Calu3 (cell line): ENCODE measurements at regions of chr1 and their contacts with region 1.

Region 1: GRCh38 chr1:92461364-92462097 is 25.2 kb downstream of the GFI1 start:
- DNase-seq: no peak
- H3K4me3 Mint-ChIP-seq: no peak overlapping the region
- H3K27ac Mint-ChIP-seq: no peak overlapping the region
- H3K4me1 Mint-ChIP-seq: no peaks in the 10 kb centered on the region
- H3K27me3 Mint-ChIP-seq: no peaks in the 10 kb centered on the region
- CTCF ChIP-seq: no peak

Region 2: GRCh38 chr1:92515796-92516201 is 54.3 kb after region 1 on chr1:
- CTCF ChIA-PET with region 1: no interaction called
- intact Hi-C with region 1: no loop called
- DNase-seq: no peak
- H3K4me3 Mint-ChIP-seq: no peak overlapping the region
- H3K27ac Mint-ChIP-seq: no peak overlapping the region
- H3K4me1 Mint-ChIP-seq: no peaks in the 10 kb centered on the region
- H3K27me3 Mint-ChIP-seq: no peaks in the 10 kb centered on the region
- CTCF ChIP-seq: no peak

Region 3: DNA sequence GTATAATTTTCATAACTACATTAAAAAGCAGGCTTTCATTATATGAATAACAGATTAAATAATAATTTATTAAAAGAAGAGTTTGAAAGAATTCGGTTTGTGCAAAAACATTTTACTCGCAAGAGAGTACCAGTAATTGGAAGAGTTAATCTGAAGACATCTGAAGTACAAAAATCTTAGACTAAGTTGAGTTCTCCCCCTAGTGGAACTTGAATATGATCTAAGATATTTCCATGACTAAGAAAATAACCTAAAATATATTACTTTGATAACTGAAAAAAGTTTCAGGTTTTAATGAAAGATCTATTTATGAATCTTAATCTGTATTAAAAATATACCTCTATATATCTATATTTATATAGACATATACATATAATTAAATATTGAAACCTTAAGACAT is 137.7 kb after region 1 on chr1:
- CTCF ChIA-PET with region 1: no interaction called
- intact Hi-C with region 1: loop called (anchors 10 kb)
- DNase-seq: no peak
- H3K4me3 Mint-ChIP-seq: no peak overlapping the region
- H3K27ac Mint-ChIP-seq: no peak overlapping the region
- H3K4me1 Mint-ChIP-seq: no peaks in the 10 kb centered on the region
- H3K27me3 Mint-ChIP-seq: no peaks in the 10 kb centered on the region
- CTCF ChIP-seq: no peak

Region 4: DNA sequence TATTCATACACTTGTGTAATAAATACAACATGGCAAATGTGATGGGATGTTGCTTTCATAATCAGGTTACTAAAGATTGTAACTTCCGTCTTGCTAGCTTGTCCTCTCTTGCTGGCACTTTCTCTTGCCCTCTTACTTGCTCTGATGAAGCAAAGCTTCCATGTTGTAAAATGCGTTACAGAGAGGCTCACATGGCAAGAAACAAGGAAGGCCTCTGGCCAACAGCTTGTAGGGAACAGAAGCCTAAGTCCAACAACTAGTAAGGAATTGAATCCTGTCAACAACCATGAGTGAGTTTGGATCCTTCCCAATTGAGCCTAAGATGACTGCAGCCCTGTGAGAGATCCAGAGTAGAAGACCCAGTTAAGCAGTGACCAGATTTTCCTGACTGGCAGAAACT is 703.3 kb after region 1 on chr1:
- CTCF ChIA-PET with region 1: no interaction called
- intact Hi-C with region 1: no loop called
- DNase-seq: no peak
- H3K4me3 Mint-ChIP-seq: no peak overlapping the region
- H3K27ac Mint-ChIP-seq: no peak overlapping the region
- H3K4me1 Mint-ChIP-seq: peaks cover 6% of the 10 kb centered on the region
- H3K27me3 Mint-ChIP-seq: no peaks in the 10 kb centered on the region
- CTCF ChIP-seq: no peak